T-cell (primary cell): ENCODE measurements at regions of chr17 and their contacts with region 1.

Region 1: GRCh38 chr17:33021731-33022408 is 30.2 kb downstream of the SPACA3 start:
- DNase-seq: no peak
- ATAC-seq: no peak
- H3K4me3 ChIP-seq: no peak overlapping the region
- H3K4me3 Mint-ChIP-seq: no peak overlapping the region
- H3K27ac ChIP-seq: no peak overlapping the region
- H3K27ac Mint-ChIP-seq: no peak overlapping the region
- H3K4me1 ChIP-seq: no peaks in the 10 kb centered on the region
- H3K4me1 Mint-ChIP-seq: no peaks in the 10 kb centered on the region
- H3K27me3 ChIP-seq: peaks cover 0 to 33% of the 10 kb centered on the region in 2 experiments
- H3K27me3 Mint-ChIP-seq: peaks cover 11 to 17% of the 10 kb centered on the region in 2 donors

Region 2: DNA sequence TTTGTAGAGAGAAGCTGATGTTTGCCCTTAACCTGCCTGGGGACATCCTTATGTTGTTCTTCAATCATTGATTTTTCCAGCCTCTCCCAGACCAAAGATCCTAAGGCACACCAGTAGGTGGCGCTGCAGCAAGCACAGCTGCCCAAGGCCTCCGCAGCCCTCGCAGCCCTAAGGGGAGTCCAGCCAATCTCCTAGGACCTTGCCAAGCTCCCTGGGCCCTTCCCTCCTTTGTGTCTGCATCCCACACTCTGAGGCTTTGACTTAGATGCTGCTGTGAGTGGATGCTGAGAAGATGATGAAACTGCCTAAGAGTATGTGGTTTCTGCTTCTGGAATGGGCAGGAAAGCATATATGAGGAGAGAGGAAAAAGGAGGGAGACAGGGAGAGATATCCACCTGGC is 16.9 kb after region 1 on chr17:
- CTCF ChIA-PET with region 1: no interaction called
- POLR2A ChIA-PET with region 1: no interaction called
- DNase-seq: no peak
- ATAC-seq: no peak
- H3K4me3 ChIP-seq: no peak overlapping the region
- H3K4me3 Mint-ChIP-seq: no peak overlapping the region
- H3K27ac ChIP-seq: no peak overlapping the region
- H3K27ac Mint-ChIP-seq: no peak overlapping the region
- H3K4me1 ChIP-seq: no peaks in the 10 kb centered on the region
- H3K4me1 Mint-ChIP-seq: no peaks in the 10 kb centered on the region
- H3K27me3 ChIP-seq: peaks cover 0 to 16% of the 10 kb centered on the region in 2 experiments
- H3K27me3 Mint-ChIP-seq: peaks cover 50 to 57% of the 10 kb centered on the region in 2 donors

Region 3: GRCh38 chr17:33079201-33079600 is 57.3 kb after region 1 on chr17:
- CTCF ChIA-PET with region 1: no interaction called
- POLR2A ChIA-PET with region 1: no interaction called
- DNase-seq: no peak
- ATAC-seq: no peak
- H3K4me3 ChIP-seq: no peak overlapping the region
- H3K4me3 Mint-ChIP-seq: no peak overlapping the region
- H3K27ac ChIP-seq: no peak overlapping the region
- H3K27ac Mint-ChIP-seq: no peak overlapping the region
- H3K4me1 ChIP-seq: no peaks in the 10 kb centered on the region
- H3K4me1 Mint-ChIP-seq: no peaks in the 10 kb centered on the region
- H3K27me3 ChIP-seq: peaks cover 0 to 23% of the 10 kb centered on the region in 2 experiments
- H3K27me3 Mint-ChIP-seq: peaks cover 47 to 54% of the 10 kb centered on the region in 2 donors

Region 4: DNA sequence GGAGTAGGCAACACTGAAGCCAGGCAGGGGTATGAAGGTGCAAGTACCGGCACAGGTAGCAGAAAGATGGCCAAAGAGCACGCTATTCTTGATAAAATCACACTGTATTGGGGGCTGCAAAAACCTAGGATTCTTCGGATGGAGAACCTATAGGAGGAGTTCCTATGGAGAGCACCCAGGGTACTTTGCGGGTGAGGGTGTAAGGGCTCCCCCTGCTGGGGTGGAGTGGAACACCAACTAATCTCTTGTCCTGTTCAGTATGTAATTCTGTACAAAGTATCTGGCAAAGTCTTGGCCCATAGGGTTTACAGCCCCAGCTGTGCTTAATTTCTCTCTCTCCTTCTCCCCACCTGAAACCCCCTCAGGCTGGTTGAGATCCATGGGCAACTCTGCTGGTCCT is 664.3 kb after region 1 on chr17:
- CTCF ChIA-PET with region 1: no interaction called
- POLR2A ChIA-PET with region 1: interaction called in 1 of 2 experiments, 13 read pairs
- DNase-seq: peak in 1 of 35 experiments; percentile 21
- ATAC-seq: no peak
- H3K4me3 ChIP-seq: no peak overlapping the region
- H3K4me3 Mint-ChIP-seq: no peak overlapping the region
- H3K27ac ChIP-seq: no peak overlapping the region
- H3K27ac Mint-ChIP-seq: no peak overlapping the region
- H3K4me1 ChIP-seq: no peaks in the 10 kb centered on the region
- H3K4me1 Mint-ChIP-seq: no peaks in the 10 kb centered on the region
- H3K27me3 ChIP-seq: peaks cover 0 to 8% of the 10 kb centered on the region in 2 experiments
- H3K27me3 Mint-ChIP-seq: peaks cover 0 to 3% of the 10 kb centered on the region in 2 donors